Right ventricle myocardium inferior (tissue), 1 donor: ENCODE measurements at regions of chr18 and their contacts with region 1.

Region 1: GRCh38 chr18:12308386-12309100 is 502 bp downstream of the TUBB6 start:
- DNase-seq: peak; percentile 92
- ATAC-seq: peak; percentile 82

Region 2: DNA sequence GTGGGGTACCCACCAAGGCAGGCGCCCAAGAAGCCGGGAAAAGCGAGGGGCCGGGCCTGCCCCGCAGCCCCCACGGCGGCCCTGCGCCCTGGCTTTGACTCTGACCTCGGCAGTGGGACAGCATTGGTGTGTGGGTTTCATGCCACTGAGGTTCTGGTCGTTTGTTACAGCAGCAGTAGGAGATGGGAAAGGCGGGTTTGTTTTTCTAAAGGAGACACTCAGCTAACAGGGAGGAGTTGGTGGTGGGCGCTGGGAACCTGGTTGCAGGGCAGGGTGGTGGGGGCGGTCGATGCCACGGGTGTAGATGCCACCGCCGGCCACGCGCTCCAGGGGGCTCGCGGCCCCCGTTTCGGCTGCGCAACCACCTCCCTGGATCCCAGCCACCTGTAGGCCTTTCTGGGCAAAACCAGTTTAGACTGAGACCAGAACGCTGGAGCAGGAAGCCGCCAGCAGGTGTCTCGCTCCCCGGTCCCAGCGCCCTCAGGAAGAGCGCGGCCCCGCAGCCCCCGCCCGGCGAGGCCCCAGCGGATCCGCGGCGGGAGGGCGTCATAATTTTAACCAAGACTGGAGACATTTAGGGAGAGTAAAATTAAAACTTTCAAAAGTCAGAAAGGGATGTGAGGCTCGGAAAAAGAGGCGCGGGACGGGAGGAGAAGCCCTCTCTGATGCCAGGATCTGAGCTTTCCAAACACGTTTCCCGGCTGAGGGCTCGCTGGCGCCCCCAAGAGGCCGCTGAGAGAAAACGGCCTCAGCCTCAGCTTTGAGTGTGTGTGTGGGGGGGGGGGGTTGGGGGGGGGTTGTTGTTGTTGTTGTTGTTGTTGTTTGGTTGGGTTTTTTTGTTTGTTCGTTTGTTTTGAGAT is 36.9 kb before region 1 on chr18:
- intact Hi-C with region 1: loop called (anchors 5 kb)
- DNase-seq: peak; percentile 83
- ATAC-seq: peak; percentile 93